Sigmoid colon (tissue), 7 donors: ENCODE measurements at regions of chr6 and their contacts with region 1.

Region 1: GRCh38 chr6:27518881-27519795 is 46.2 kb upstream of the ZNF184 start:
- DNase-seq: peak; percentile 88
- H3K4me3 ChIP-seq: peak overlapping the region; percentile 53 to 80 (median 62)
- H3K27ac ChIP-seq: peak overlapping the region; percentile 86 to 93 (median 89)
- H3K4me1 ChIP-seq: peaks cover 0 to 18% (median 10%) of the 10 kb centered on the region in 4 donors
- H3K27me3 ChIP-seq: peaks cover 0 to 15% (median 0%) of the 10 kb centered on the region in 3 donors
- CTCF ChIP-seq: peak; percentile 25 to 67 (median 62)
- EP300 ChIP-seq: no peak
- POLR2A ChIP-seq: no peak

Region 2: DNA sequence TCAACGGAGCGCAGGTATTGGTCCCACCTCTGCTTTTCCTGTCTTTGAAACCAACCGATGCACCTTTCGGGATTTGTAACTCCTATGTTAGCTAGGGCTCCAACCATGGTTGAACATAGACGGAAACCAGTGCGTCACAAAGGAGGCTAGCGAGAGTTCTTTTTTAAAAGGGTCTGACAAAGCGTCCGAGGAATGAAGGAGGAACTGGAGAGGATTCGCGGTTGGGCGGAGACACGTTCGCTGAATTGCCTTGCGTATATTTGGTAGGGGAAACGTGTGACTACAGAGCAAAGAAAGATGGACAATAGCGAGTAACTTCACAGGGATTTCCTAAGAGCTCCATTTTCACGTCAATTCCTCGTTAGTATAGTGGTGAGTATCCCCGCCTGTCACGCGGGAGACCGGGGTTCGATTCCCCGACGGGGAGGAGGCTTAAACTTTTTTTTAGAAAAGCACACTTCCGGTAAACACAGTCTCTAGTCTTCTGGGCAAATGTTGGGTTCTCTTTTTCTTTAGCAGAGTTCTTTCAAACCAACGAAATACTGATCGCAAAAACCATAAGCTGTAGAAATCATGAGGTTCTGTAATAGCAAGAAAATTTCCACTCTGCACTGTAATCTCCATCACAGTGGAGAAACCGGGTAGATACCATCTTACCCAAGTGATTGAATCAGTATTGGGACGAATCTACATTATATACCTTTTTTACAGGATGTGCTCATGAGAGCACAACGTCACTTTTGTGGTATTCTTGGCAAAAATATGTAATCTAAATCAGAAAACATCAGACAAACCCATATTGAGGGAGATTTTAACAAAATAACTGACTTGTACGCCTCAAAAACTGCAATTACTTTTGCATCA is 39.6 kb before region 1 on chr6:
- intact Hi-C with region 1: loop called (anchors 5 kb)
- DNase-seq: peak; percentile 91
- H3K4me3 ChIP-seq: peak overlapping the region; percentile 64 to 74 (median 68)
- H3K27ac ChIP-seq: peak overlapping the region; percentile 91 to 96 (median 95)
- H3K4me1 ChIP-seq: peaks cover 0 to 14% (median 9%) of the 10 kb centered on the region in 4 donors
- H3K27me3 ChIP-seq: no peaks in the 10 kb centered on the region
- CTCF ChIP-seq: no peak
- EP300 ChIP-seq: no peak
- POLR2A ChIP-seq: no peak

Region 3: DNA sequence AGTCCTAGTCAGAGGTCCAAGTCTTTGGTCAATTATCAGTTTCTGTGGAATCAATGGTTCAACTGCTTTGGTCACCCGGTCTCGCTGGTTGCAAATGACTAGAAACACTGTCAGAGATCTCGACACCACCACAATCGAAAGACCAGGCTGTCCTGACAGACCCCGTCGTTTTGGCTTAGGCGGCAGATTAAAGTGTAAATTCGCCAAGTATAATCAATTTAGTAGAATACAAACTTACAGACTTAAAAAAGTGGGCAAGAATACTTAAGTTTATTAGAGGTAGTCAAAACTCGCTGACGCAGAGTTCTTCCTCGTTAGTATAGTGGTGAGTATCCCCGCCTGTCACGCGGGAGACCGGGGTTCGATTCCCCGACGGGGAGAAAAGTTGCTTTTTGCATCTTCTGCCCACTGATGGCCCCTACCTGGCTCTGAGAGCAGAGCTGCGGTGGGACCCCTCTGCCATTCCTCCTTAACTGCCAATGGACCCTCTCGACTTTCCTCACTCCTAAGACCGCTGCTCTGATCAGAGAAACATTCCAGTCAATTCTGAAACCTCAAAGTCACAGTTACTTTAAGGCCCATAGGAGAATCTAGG is 15.6 kb before region 1 on chr6:
- intact Hi-C with region 1: loop called (anchors 2 kb)
- DNase-seq: peak; percentile 74
- H3K4me3 ChIP-seq: peak overlapping the region; percentile 18 to 44 (median 35)
- H3K27ac ChIP-seq: peak overlapping the region in 1 of 4 donors; percentile 40
- H3K4me1 ChIP-seq: peaks cover 0 to 11% (median 6%) of the 10 kb centered on the region in 4 donors
- H3K27me3 ChIP-seq: peaks cover 0 to 61% (median 28%) of the 10 kb centered on the region in 3 donors
- CTCF ChIP-seq: no peak
- EP300 ChIP-seq: no peak
- POLR2A ChIP-seq: no peak

Region 4: DNA sequence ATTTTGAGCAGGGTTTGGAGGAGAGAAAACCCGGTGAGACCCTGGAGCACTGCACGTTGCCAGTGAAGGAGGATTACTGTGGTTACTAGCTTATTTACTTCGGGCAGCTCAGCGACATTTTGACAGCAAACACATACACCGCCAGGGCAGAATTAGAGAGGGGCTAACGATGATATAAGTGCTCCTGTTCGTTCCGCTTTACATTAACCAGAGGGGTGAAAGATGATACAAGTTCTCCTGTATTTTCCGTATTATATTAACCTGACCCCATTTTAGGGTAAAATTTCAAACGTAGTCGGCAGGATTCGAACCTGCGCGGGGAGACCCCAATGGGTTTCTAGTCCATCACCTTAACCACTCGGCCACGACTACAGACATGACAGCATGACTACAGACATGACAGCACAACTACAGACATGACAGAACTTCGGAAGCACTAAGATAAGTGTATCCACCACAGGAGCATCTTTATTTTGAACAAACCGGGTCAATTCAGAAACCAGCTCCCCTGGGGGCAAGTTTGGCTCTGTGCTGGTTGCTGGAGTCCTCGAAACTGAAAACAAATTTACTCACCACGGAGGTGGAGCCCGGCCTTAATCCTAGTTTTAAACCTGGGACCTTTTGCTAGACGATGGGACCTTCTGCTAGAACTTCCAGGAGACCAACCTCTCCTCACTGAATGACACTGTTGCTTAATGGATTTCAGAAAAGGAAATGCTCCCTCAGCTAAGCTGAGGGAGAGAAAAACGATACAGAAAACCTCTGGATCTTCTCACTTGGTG is 34.2 kb after region 1 on chr6:
- intact Hi-C with region 1: no loop called
- DNase-seq: no peak
- H3K4me3 ChIP-seq: no peak overlapping the region
- H3K27ac ChIP-seq: no peak overlapping the region
- H3K4me1 ChIP-seq: no peaks in the 10 kb centered on the region
- H3K27me3 ChIP-seq: peaks cover 6 to 100% (median 76%) of the 10 kb centered on the region in 3 donors
- CTCF ChIP-seq: no peak
- EP300 ChIP-seq: no peak
- POLR2A ChIP-seq: no peak

Region 5: DNA sequence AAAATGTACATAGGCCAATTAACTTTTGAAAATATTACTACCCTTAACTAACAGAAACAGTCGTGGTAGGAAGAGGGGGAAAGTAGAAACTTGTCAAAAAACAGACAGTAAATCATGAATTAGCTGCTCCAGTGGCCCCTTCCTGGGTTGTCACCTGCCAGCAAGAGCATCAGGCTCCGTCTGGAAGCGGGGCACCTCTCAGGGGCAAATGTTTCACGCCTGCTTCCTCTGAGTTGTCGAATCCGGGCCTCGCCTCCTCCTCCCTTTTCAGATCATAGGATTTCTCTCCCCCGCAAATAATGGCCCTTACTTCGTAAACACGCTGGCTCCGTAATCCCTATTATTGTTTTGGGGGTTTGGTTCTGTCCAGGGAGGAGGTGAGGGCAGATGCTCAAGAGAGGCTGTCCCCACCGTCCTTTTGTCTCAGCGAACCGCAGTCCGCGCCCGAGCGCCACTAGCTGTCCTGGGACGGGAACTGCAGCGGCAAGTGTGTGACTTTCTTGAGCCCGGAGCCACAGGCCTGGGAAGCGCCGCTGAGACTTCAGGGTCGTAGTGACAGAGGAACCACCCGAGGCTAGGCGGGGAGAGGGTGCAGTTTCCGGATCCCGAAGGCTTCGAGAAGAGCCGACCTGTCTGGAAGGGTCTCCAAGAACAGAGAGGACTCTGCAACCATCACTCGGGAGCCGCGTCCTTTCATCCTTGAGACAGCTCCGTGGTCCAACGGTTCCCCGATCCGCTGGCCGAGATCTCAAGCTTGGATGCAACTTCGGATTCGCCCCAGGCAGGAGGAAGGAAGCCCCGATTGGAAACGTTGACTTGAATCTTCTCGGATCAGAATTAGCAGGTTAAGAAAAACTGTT is 168.2 kb after region 1 on chr6:
- intact Hi-C with region 1: loop called (anchors 10 kb)
- DNase-seq: peak; percentile 79
- H3K4me3 ChIP-seq: peak overlapping the region; percentile 34 to 50 (median 42)
- H3K27ac ChIP-seq: peak overlapping the region; percentile 32 to 63 (median 55)
- H3K4me1 ChIP-seq: peaks cover 0 to 16% (median 3%) of the 10 kb centered on the region in 4 donors
- H3K27me3 ChIP-seq: peaks cover 0 to 10% (median 7%) of the 10 kb centered on the region in 3 donors
- CTCF ChIP-seq: peak in 3 of 4 experiments; percentile 22 to 52 (median 25)
- EP300 ChIP-seq: no peak
- POLR2A ChIP-seq: no peak

Region 6: DNA sequence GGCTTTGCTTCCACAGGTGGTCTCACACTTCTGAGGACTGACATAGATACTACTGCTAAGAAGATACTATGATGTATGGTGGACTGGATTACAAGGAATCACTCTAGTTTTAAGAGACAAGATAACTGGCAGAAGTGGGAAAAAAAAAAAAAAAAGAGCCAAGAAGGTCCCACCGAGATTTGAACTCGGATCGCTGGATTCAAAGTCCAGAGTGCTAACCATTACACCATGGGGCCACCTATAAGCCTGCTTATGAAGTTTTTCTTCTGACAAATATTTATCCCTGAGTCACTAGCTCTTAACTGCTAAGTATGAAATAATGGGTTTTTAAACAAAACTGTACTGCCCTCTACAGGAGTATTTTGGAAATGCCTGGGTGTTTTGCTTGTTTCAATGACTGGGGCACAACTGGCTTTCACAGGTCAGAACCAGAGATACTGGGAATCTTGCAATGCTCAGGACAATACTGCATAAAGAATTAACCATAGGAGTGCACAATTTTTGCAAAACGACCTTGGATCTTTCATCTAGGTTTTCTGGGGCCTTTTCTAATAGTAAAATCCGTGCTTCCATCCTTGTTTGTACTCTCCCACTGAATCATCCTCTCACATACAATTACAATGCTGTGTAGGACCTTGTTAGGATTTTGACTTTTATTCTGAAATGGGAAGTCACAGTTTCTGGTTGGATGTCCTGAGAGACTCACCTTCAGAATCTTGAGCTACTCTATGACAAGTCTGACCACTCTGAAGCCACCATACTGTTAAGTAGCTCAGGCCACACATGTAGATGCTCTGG is 276.8 kb after region 1 on chr6:
- intact Hi-C with region 1: loop called (anchors 5 kb)
- DNase-seq: no peak
- H3K4me3 ChIP-seq: no peak overlapping the region
- H3K27ac ChIP-seq: no peak overlapping the region
- H3K4me1 ChIP-seq: peaks cover 0 to 18% (median 12%) of the 10 kb centered on the region in 4 donors
- H3K27me3 ChIP-seq: peaks cover 0 to 15% (median 5%) of the 10 kb centered on the region in 3 donors
- CTCF ChIP-seq: peak; percentile 37 to 83 (median 77)
- EP300 ChIP-seq: no peak
- POLR2A ChIP-seq: no peak

Region 7: DNA sequence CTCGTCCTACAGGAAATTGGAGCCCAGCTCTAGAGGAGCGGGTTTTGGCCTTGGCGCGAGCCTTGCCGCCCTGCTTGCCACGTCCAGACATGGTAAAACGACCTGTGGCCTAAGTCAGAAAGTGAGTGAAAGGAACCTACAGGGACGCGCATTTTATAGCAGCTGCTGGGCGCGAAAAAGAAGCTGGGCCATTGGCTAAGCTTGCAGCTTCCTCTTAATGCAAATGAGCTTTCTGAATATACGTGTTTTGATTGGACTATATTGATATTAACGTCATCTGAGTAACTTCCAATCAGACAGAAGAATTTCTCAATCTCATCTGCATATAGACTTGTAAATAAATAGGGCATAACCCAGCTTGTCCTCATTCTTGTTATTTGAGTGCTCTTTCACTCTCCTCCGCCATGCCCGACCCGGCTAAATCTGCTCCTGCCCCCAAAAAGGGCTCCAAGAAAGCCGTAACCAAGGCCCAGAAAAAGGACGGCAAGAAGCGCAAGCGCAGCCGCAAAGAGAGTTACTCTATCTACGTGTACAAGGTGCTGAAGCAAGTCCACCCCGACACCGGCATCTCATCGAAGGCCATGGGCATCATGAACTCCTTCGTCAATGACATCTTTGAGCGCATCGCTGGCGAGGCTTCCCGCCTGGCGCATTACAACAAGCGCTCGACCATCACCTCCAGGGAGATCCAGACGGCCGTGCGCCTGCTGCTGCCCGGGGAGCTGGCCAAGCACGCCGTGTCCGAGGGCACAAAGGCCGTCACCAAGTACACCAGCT is 374.1 kb after region 1 on chr6:
- intact Hi-C with region 1: loop called (anchors 2 kb)
- DNase-seq: peak; percentile 81
- H3K4me3 ChIP-seq: peak overlapping the region; percentile 48 to 71 (median 59)
- H3K27ac ChIP-seq: peak overlapping the region in 3 of 4 donors; percentile 33 to 92 (median 59)
- H3K4me1 ChIP-seq: peaks cover 0 to 25% (median 24%) of the 10 kb centered on the region in 4 donors
- H3K27me3 ChIP-seq: peaks cover 22 to 56% (median 47%) of the 10 kb centered on the region in 3 donors
- CTCF ChIP-seq: no peak
- EP300 ChIP-seq: no peak
- POLR2A ChIP-seq: peak in 1 of 2 donors; percentile 84